ENCODE measurements at regions of chr4 and their contacts with region 1.

Region 1: DNA sequence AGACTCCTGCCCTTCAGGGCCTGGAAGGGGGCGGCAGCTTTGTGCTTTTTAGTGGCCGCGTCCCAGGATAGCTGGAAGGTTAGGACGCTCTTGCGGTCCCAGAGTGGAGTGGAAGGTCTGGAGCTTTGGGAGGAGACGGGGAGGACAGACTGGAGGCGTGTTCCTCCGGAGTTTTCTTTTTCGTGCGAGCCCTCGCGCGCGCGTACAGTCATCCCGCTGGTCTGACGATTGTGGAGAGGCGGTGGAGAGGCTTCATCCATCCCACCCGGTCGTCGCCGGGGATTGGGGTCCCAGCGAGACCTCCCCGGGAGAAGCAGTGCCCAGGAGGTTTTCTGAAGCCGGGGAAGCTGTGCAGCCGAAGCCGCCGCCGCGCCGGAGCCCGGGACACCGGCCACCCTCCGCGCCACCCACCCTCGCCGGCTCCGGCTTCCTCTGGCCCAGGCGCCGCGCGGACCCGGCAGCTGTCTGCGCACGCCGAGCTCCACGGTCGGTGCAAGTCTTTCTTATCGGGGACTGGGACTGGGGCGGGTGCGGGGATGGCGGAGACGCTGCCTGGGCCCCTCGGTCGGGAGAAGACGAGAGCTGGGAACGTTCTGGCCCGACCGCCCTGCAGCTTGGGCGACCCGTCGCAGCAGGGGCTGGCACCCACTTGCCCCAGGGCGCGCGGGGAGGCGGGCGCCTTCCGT is at the start of gene EDNRA:
- DNase-seq: no peak
- H3K4me3 ChIP-seq: peak within 1 kb of the TSS; percentile 38 to 39
- H3K27ac ChIP-seq: peak within 1 kb of the TSS; percentile 74 to 76
- H3K4me1 ChIP-seq: no peaks in the 10 kb centered on the region
- H3K27me3 ChIP-seq: no peaks in the 10 kb centered on the region
- CTCF ChIP-seq: no peak
- POLR2A ChIP-seq: no peak
- total RNA-seq, gene EDNRA: 17.8 to 27.3 TPM

Region 2: DNA sequence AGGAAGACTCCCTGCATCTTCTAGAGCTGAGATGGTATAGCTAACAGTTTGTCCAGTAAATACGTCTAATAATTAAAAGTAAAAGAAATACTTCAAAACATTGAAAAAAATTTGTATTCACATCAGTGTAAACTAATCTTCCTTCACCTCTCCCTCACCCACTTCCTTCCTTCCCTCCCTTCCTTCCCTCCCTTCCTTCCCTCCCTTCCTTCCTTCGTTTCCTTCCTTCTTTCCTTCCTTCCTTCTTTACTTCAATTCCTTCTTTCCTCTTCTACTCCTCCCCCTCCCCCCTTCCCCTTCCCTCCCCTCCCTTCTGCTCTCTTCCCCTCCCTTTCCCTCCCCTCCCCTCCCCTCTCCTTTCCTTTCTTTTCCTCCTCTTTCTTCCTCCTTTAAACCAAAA is 738.6 kb before region 1 on chr4:
- intact Hi-C with region 1: no loop called
- DNase-seq: no peak
- H3K4me3 ChIP-seq: no peak overlapping the region
- H3K27ac ChIP-seq: no peak overlapping the region
- H3K4me1 ChIP-seq: no peaks in the 10 kb centered on the region
- H3K27me3 ChIP-seq: no peaks in the 10 kb centered on the region
- CTCF ChIP-seq: no peak
- POLR2A ChIP-seq: no peak

Region 3: DNA sequence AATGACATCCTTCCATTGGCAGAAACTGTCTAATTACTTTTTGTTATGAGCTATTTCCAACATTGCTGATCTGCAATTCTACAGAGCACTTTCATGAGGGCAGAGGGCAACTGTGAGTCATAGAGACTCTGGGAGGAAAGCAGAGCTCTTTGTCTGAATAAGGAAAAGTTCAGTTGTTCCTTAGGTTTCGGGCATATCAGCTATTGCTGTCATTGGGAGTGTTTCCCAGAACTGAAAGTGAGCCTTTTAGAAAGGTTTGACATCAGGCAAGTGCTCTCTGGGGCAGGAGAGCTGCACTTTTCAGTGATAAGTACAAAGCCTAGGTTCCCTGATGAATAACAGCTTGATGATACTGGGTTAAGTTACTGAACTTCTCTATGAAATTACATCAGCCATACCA is 119.3 kb before region 1 on chr4:
- intact Hi-C with region 1: no loop called
- DNase-seq: no peak
- H3K4me3 ChIP-seq: no peak overlapping the region
- H3K27ac ChIP-seq: peak overlapping the region; percentile 26 to 63
- H3K4me1 ChIP-seq: no peaks in the 10 kb centered on the region
- H3K27me3 ChIP-seq: no peaks in the 10 kb centered on the region
- CTCF ChIP-seq: no peak
- POLR2A ChIP-seq: no peak

Region 4: GRCh38 chr4:147518846-147519767 is 38.1 kb after region 1 on chr4:
- intact Hi-C with region 1: loop called (anchors 5 kb)
- DNase-seq: peak; percentile 53
- H3K4me3 ChIP-seq: no peak overlapping the region
- H3K27ac ChIP-seq: no peak overlapping the region
- H3K4me1 ChIP-seq: no peaks in the 10 kb centered on the region
- H3K27me3 ChIP-seq: no peaks in the 10 kb centered on the region
- CTCF ChIP-seq: peak in 3 of 4 experiments; percentile 64 to 72 (median 67)
- POLR2A ChIP-seq: no peak

Measured in prostate gland (tissue), 2 donors.